OCI-LY7 (cell line): ENCODE measurements at regions of chr6 and their contacts with region 1.

Region 1: DNA sequence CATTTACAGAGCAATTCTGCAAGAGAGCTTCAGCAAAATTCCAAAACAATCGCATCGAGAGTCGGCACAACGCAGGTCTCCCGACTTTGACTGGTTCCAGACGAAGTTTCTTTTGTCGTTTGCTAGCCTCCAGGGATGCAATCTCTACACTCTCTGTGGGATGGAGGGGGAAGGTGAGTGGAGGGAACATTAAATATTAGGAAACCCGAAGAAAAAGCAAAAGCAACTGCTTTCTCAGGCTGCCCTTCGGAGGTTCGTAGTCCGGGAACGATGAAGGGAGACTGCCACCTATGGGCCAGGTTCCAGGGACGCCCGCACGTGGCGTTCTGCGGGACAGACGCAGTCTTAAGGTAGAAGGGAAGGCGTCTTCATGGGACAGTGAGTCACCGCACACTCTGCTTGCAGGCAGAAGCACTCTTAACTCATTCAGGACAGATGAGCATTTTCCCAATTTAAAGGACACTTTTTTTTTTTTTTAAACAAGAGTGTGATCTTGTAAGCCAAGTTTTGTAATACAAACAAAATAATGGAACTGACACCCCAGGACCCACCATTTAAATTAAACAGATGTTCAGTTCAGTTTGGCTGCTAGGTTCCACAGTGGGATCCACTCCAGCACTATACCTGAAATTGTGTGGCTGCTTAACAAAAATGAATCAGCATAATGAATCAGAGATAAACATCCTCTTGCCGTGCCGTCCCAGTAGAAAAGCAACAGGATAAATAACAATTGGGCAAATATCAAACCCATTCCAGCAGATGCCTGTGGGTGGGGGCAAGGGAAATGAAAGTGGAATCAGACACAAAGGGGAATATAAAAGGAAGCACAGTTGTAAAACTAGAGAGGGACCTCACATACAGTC is 65.8 kb upstream of the ARMC2 start:
- DNase-seq: peak; percentile 80
- H3K4me3 ChIP-seq: peak overlapping the region; percentile 48
- H3K27ac ChIP-seq: no peak overlapping the region
- H3K4me1 ChIP-seq: peaks cover 17% of the 10 kb centered on the region
- CTCF ChIP-seq: peak; percentile 90

Region 2: DNA sequence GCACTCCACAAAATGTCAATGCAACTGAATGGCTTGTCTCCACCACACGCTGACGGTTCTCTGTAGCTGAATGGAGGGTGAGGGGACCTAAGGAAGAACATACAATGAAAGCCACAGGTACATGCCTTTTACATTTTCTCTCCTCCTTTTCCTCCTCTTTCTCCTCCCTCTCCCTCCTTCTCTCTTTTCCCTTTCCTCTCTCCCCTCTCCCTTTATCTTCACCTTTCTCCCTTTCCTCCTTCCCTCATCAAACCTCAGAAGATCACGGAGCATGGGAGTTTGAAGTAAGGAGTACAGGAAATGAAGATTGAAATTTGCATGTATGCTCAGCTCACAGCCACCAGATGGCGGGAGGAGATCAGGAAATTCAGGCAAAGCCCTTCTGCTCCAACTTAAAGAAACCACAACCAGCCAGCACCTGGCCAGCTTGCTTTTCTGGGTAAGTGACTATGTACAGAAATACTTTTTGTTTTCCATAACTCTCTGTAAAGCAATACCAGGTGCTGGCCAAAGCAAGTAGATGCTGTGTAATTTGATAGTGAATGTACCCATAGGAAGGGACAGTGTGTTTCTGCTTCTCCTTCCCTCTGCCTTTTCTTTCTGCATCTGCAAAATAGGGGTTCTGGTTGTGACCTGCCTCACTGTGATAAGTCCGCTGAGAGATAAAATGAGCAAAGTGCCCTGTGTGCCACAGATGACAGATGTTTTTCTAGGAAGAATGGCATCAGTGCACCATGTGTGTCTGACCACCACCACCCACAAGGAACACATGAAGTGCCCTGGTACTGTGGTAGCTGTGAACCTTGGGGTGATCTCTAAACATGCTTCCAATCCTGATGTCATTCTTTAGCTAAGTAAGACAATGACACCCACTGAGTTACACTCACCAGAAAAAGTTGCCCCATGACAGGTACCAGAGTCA is 240.3 kb before region 1 on chr6:
- CTCF ChIA-PET with region 1: no interaction called
- POLR2A ChIA-PET with region 1: interaction called, 4 read pairs
- intact Hi-C with region 1: loop called (anchors 1 kb)
- DNase-seq: peak; percentile 93
- H3K4me3 ChIP-seq: peak overlapping the region; percentile 33
- H3K27ac ChIP-seq: peak overlapping the region; percentile 57
- H3K4me1 ChIP-seq: peaks cover 24% of the 10 kb centered on the region
- CTCF ChIP-seq: peak; percentile 98

Region 3: GRCh38 chr6:108558372-108559096 is 223.9 kb before region 1 on chr6:
- CTCF ChIA-PET with region 1: no interaction called
- POLR2A ChIA-PET with region 1: interaction called, 4 read pairs
- intact Hi-C with region 1: loop called (anchors 1 kb)
- DNase-seq: peak; percentile 99
- H3K4me3 ChIP-seq: peak overlapping the region; percentile 91
- H3K27ac ChIP-seq: peak overlapping the region; percentile 64
- H3K4me1 ChIP-seq: peaks cover 12% of the 10 kb centered on the region
- CTCF ChIP-seq: 0 out of 2 replicates have a peak, but pooled peaks have one; percentile 3